ENCODE measurements at regions of chr2 and their contacts with region 1.

Region 1: GRCh38 chr2:215401896-215402379 is 33.9 kb downstream of the FN1 start:
- DNase-seq: no peak
- ATAC-seq: peak; percentile 82
- H3K4me3 ChIP-seq: no peak overlapping the region
- H3K27ac ChIP-seq: no peak overlapping the region
- H3K4me1 ChIP-seq: no peaks in the 10 kb centered on the region
- H3K27me3 ChIP-seq: no peaks in the 10 kb centered on the region
- CTCF ChIP-seq: no peak
- EP300 ChIP-seq: no peak
- POLR2A ChIP-seq: no peak
- RAD21 ChIP-seq: no peak

Region 2: GRCh38 chr2:215391531-215391930 is 10.4 kb before region 1 on chr2:
- CTCF ChIA-PET with region 1: interaction called, 5 read pairs
- POLR2A ChIA-PET with region 1: no interaction called
- RAD21 ChIA-PET with region 1: interaction called, 3 read pairs
- SMC1A ChIA-PET with region 1: interaction called, 12 read pairs
- in situ Hi-C with region 1: no loop called
- intact Hi-C with region 1: no loop called
- DNase-seq: no peak
- ATAC-seq: no peak
- H3K4me3 ChIP-seq: no peak overlapping the region
- H3K27ac ChIP-seq: no peak overlapping the region
- H3K4me1 ChIP-seq: no peaks in the 10 kb centered on the region
- H3K27me3 ChIP-seq: no peaks in the 10 kb centered on the region
- CTCF ChIP-seq: no peak
- EP300 ChIP-seq: no peak
- POLR2A ChIP-seq: no peak
- RAD21 ChIP-seq: no peak

Region 3: GRCh38 chr2:216371756-216372702 is 970.1 kb after region 1 on chr2 and contains the start of gene MARCHF4:
- CTCF ChIA-PET with region 1: no interaction called
- POLR2A ChIA-PET with region 1: no interaction called
- RAD21 ChIA-PET with region 1: no interaction called
- SMC1A ChIA-PET with region 1: no interaction called
- in situ Hi-C with region 1: no loop called
- intact Hi-C with region 1: no loop called
- DNase-seq: no peak
- ATAC-seq: peak; percentile 61
- H3K4me3 ChIP-seq: no peak within 1 kb of the TSS
- H3K27ac ChIP-seq: no peak within 1 kb of the TSS
- H3K4me1 ChIP-seq: no peaks in the 10 kb centered on the region
- H3K27me3 ChIP-seq: peaks cover 4 to 6% of the 10 kb centered on the region in 2 experiments; a peak in 3 of 4 replicates
- CTCF ChIP-seq: no peak
- EP300 ChIP-seq: no peak
- POLR2A ChIP-seq: no peak
- RAD21 ChIP-seq: no peak
- polyA plus RNA-seq, gene MARCHF4: not detected

Measured in GM12878 (cell line).